Stomach (tissue), 19 donors: ENCODE measurements at regions of chr22 and their contacts with region 1.

Region 1: GRCh38 chr22:24244101-24244787 is 638 bp downstream of the GGT5 start:
- DNase-seq: peak in 1 of 2 donors; percentile 56
- H3K4me3 ChIP-seq: peak overlapping the region; percentile 19 to 44 (median 32)
- H3K27ac ChIP-seq: peak overlapping the region; percentile 21 to 88 (median 85)
- H3K4me1 ChIP-seq: peaks cover 21 to 59% (median 36%) of the 10 kb centered on the region in 4 donors
- H3K27me3 ChIP-seq: no peaks in the 10 kb centered on the region
- CTCF ChIP-seq: no peak
- EP300 ChIP-seq: no peak
- POLR2A ChIP-seq: no peak

Region 2: DNA sequence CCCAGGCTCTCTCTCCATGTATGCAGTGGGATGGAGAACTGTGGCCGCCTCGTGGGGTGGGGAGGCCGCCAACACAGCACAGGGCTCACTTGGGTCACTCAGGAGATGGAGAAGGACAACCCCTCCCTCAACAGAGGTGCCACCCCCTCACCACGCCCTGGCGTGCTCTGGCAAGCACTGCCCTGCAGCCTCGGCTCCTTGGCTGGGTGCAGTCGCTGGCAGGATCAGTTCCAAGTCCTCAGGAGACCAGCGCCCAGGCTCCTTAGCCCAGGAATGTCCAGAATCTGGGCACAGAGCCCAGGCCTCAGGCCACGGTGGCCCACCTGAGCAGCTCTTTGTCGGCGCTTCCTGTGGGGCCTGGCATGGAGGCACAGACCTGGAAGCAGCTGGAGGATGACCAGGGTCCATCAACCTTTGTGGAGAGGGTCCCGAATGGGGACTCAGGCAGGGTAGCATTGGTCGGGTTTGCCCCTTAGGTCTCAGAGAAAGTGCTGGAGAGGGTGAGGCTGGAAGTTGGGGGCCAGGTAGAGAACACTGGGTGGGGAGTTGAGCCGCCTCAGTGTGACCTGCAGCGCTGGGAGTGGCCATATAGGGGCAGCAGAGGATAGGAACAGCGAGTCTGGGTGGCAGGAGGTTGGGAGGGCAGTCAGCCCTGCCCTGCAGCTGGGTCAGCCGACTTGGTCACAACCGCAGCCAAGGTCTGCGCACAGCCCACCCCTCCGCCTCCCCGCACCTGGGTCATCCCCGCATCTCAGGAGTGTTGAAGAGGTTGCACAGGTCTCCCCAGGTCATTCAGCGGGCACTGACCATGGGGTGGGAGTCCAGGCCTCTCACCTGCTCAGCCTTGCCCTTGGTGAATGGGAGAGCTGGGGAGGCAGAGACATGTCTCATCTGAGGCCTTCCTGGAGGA is 54.7 kb before region 1 on chr22:
- intact Hi-C with region 1: loop called (anchors 10 kb)
- DNase-seq: peak; percentile 83 to 84
- H3K4me3 ChIP-seq: no peak overlapping the region
- H3K27ac ChIP-seq: peak overlapping the region; percentile 35 to 78 (median 61)
- H3K4me1 ChIP-seq: peaks cover 10 to 24% (median 21%) of the 10 kb centered on the region in 4 donors
- H3K27me3 ChIP-seq: no peaks in the 10 kb centered on the region
- CTCF ChIP-seq: peak in 5 of 7 experiments; percentile 79 to 97 (median 93)
- EP300 ChIP-seq: no peak
- POLR2A ChIP-seq: no peak